ENCODE measurements at regions of chr2 and their contacts with region 1.

Region 1: GRCh38 chr2:85551698-85552678 is 9.3 kb downstream of the GGCX start:
- DNase-seq: peak in 1 of 2 experiments; percentile 87
- ATAC-seq: peak; percentile 52 to 64
- H3K4me3 ChIP-seq: no peak overlapping the region
- H3K27ac ChIP-seq: peak overlapping the region; percentile 34 to 45; a peak in 5 of 6 replicates
- H3K4me1 ChIP-seq: peaks cover 10% of the 10 kb centered on the region
- CTCF ChIP-seq: peak; percentile 98
- EP300 ChIP-seq: no peak
- POLR2A ChIP-seq: no peak
- RAD21 ChIP-seq: peak; percentile 99 to 100

Region 2: GRCh38 chr2:85369500-85369899 is 182.5 kb before region 1 on chr2:
- CTCF ChIA-PET with region 1: interaction called, 11 read pairs
- POLR2A ChIA-PET with region 1: no interaction called
- DNase-seq: peak in 1 of 2 experiments; percentile 30
- ATAC-seq: peak; percentile 64 to 72; a peak in 5 of 6 replicates
- H3K4me3 ChIP-seq: no peak overlapping the region
- H3K27ac ChIP-seq: peak overlapping the region in 1 of 2 experiments; percentile 11; a peak in 1 of 6 replicates
- H3K4me1 ChIP-seq: peaks cover 9% of the 10 kb centered on the region; the same call in 2 of the 3 replicates
- CTCF ChIP-seq: no peak
- EP300 ChIP-seq: no peak
- POLR2A ChIP-seq: no peak
- RAD21 ChIP-seq: no peak

Region 3: GRCh38 chr2:85390941-85391669 is 160.9 kb before region 1 on chr2:
- CTCF ChIA-PET with region 1: interaction called, 189 read pairs
- POLR2A ChIA-PET with region 1: no interaction called
- DNase-seq: peak; percentile 71 to 85
- ATAC-seq: peak; percentile 79 to 92
- H3K4me3 ChIP-seq: no peak overlapping the region
- H3K27ac ChIP-seq: no peak overlapping the region
- H3K4me1 ChIP-seq: peaks cover 6% of the 10 kb centered on the region; the same call in 2 of the 3 replicates
- CTCF ChIP-seq: peak; percentile 83
- EP300 ChIP-seq: no peak
- POLR2A ChIP-seq: no peak
- RAD21 ChIP-seq: peak; percentile 93 to 98

Region 4: DNA sequence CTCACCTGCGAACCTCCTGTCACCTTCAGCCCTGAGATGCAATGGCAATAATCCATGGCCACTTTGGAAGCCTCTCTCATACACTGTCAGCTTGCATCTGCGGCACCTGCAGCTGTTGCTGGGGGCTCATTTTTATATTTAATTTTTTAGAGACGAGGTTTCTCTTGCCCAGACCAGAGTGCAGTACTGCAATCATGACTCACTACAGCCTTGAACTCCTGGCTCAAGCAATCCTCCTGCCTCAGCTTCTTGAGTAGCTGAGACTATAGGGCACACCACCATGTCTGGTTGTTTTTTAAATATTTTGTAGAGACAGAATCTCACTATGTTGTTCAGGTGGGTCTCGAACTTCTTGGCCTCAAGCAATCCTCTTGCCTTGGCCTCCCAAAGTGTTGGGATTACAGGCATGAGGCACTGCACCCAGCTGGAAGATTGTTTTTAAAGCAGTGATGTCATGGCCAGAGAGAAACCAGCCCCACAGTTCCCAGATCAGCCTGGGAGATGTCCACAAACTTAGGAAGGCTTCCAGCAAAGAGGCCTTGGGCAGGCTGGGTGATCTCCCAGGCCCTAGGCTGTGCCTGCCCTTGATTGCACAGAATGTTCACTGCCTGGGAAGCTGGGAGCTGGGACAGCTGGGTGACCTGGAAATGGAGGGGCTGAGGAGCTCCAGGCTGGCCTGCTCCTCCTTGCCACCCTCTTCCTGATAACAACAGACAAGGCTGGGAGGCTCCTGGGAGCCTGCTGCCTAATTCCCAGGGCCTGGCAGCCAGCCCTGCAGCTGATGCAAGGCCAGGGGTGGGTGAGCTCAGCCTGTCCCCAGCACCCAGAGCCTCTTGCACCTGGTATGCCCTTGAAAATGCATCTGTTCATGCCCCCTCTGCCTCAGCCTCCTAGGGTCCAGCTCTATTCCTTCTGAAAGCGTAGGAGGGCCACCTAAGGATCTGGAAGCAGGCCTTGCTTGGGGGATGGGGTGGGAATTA is 106.4 kb before region 1 on chr2:
- CTCF ChIA-PET with region 1: interaction called, 22 read pairs
- POLR2A ChIA-PET with region 1: no interaction called
- DNase-seq: peak in 1 of 2 experiments; percentile 67
- ATAC-seq: peak; percentile 68 to 76
- H3K4me3 ChIP-seq: no peak overlapping the region
- H3K27ac ChIP-seq: peak overlapping the region; percentile 84 to 92
- H3K4me1 ChIP-seq: peaks cover 30% of the 10 kb centered on the region
- CTCF ChIP-seq: no peak
- EP300 ChIP-seq: no peak
- POLR2A ChIP-seq: no peak
- RAD21 ChIP-seq: no peak

Region 5: GRCh38 chr2:85511008-85511811 is 40.8 kb before region 1 on chr2:
- CTCF ChIA-PET with region 1: interaction called, 11 read pairs
- POLR2A ChIA-PET with region 1: no interaction called
- DNase-seq: no peak
- ATAC-seq: no peak; a peak in 1 of 6 replicates
- H3K4me3 ChIP-seq: no peak overlapping the region
- H3K27ac ChIP-seq: peak overlapping the region; percentile 1 to 58; a peak in 4 of 6 replicates
- H3K4me1 ChIP-seq: peaks cover 26% of the 10 kb centered on the region
- CTCF ChIP-seq: no peak
- EP300 ChIP-seq: no peak
- POLR2A ChIP-seq: no peak
- RAD21 ChIP-seq: no peak

Region 6: GRCh38 chr2:85702172-85702571 is 150.2 kb after region 1 on chr2:
- CTCF ChIA-PET with region 1: no interaction called
- POLR2A ChIA-PET with region 1: no interaction called
- DNase-seq: no peak
- ATAC-seq: no peak
- H3K4me3 ChIP-seq: no peak overlapping the region
- H3K27ac ChIP-seq: peak overlapping the region; percentile 78 to 84; a peak in 5 of 6 replicates
- H3K4me1 ChIP-seq: peaks cover 60% of the 10 kb centered on the region
- CTCF ChIP-seq: no peak
- EP300 ChIP-seq: peak in 1 of 2 experiments; percentile 29; a peak in 1 of 5 replicates
- POLR2A ChIP-seq: no peak
- RAD21 ChIP-seq: no peak

Measured in A549 (cell line).